Stomach (tissue), 19 donors: ENCODE measurements at regions of chr1 and their contacts with region 1.

Region 1: DNA sequence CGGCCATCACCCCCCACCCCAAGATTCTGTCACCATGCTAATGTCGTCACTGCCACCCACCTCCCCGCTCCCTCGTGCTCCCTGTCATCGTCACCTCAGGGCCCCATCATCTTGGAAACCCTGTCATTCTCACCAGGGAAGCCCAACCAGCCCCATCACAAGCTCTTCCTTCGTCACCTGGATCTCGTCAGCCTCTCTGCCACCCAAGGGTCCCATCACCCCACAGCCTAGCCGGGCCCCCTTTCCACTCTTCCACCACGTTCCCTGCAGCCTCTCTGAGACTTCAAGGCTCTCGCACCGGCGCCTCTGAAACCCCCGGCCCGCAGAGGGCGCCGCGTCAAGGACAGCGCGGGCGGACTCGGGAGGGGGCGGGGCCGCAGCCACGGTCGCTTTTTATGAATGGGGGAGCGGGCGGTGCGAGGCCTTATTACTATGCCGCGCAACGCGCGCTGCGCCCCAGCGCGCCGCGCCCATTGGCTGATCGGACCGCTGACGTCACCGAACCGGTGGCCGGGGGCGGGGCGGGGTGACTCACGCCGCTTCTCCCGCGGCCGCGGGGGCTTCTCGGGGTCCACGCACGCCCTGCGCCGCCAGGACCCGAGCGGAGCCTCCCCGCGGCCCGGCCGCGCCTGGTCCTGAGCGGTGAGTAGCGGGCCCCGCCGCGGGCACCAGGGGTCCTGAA is at the start of gene GPR3:
- DNase-seq: peak; percentile 92 to 96
- H3K4me3 ChIP-seq: peak within 1 kb of the TSS; percentile 44 to 58 (median 50)
- H3K27ac ChIP-seq: peak within 1 kb of the TSS; percentile 28 to 83 (median 67)
- H3K4me1 ChIP-seq: peaks cover 22 to 39% (median 25%) of the 10 kb centered on the region in 4 donors
- H3K27me3 ChIP-seq: peaks cover 0 to 6% (median 0%) of the 10 kb centered on the region in 3 donors
- CTCF ChIP-seq: peak in 5 of 7 experiments; percentile 13 to 53 (median 33)
- EP300 ChIP-seq: no peak
- POLR2A ChIP-seq: no peak
- total RNA-seq, gene GPR3: 0.18 to 0.43 TPM in 2 of 5 donors, not detected in the others

Region 2: GRCh38 chr1:27300341-27301051 is 91.7 kb before region 1 on chr1:
- intact Hi-C with region 1: loop called (anchors 5 kb)
- DNase-seq: peak; percentile 85 to 97
- H3K4me3 ChIP-seq: no peak overlapping the region
- H3K27ac ChIP-seq: peak overlapping the region; percentile 37 to 90 (median 88)
- H3K4me1 ChIP-seq: peaks cover 15 to 51% (median 31%) of the 10 kb centered on the region in 4 donors
- H3K27me3 ChIP-seq: no peaks in the 10 kb centered on the region
- CTCF ChIP-seq: peak in 6 of 7 experiments; percentile 88 to 100 (median 99)
- EP300 ChIP-seq: no peak
- POLR2A ChIP-seq: no peak

Region 3: GRCh38 chr1:27357281-27358037 is 34.8 kb before region 1 on chr1:
- intact Hi-C with region 1: loop called (anchors 5 kb)
- DNase-seq: peak; percentile 87 to 92
- H3K4me3 ChIP-seq: peak overlapping the region; percentile 29 to 47 (median 34)
- H3K27ac ChIP-seq: peak overlapping the region; percentile 45 to 82 (median 69)
- H3K4me1 ChIP-seq: peaks cover 16 to 39% (median 29%) of the 10 kb centered on the region in 4 donors
- H3K27me3 ChIP-seq: no peaks in the 10 kb centered on the region
- CTCF ChIP-seq: peak in 6 of 7 experiments; percentile 46 to 100 (median 94)
- EP300 ChIP-seq: no peak
- POLR2A ChIP-seq: no peak

Region 4: DNA sequence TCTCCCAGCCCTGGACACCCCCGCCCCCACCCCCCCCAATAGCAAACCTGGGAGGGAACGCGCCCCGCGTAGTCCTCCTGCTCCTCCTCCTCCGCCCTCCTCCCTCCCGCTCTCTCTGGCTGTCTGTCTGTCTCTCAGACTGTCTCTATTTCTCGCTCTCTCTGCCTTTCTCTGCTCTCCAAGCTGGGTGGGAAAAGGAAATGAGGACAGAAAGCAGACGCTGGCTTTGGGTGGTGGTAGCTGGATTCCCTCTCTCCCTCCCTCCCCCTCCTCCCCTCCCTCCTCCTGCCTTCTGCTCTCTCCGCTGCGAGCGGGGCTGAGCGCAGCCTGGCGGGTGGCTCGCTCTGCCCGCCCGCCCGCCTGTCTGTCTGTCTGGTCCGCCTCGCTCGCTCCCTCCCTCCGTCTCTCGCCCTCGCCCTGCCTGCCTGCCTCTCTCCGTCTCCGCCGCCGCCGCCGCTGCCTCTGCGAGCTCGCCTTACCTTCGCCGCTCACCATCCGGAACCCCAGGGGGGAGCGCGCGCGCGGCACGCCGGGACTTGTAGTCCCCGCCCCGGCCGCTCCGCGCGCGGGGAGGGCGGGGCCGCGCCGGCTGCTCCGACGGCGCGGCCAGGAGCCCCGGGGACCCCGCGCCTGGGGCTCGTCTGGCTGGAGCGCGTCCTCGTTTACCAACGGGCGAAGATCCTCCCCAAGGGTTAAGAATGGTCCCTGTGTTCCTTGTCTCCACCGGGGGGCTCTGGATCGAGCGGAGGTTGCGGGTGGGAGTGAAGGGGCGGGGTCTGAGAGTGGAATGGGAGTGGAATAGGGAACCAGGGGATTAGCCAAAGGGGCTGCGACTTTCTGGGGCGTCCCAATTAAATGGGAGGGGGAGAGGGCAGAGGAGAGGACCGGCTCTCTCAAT is 211.7 kb after region 1 on chr1 and contains the start of gene AHDC1:
- intact Hi-C with region 1: loop called (anchors 5 kb)
- DNase-seq: peak; percentile 95 to 97
- H3K4me3 ChIP-seq: peak within 1 kb of the TSS; percentile 79 to 98 (median 90)
- H3K27ac ChIP-seq: peak within 1 kb of the TSS; percentile 89 to 99 (median 96)
- H3K4me1 ChIP-seq: peaks cover 36 to 66% (median 62%) of the 10 kb centered on the region in 4 donors
- H3K27me3 ChIP-seq: no peaks in the 10 kb centered on the region
- CTCF ChIP-seq: peak in 2 of 7 experiments; percentile 16 to 18
- EP300 ChIP-seq: no peak
- POLR2A ChIP-seq: peak in 2 of 4 donors; percentile 33 to 71
- total RNA-seq, gene AHDC1: 10.8 to 95.0 (median 35.1) TPM

Region 5: DNA sequence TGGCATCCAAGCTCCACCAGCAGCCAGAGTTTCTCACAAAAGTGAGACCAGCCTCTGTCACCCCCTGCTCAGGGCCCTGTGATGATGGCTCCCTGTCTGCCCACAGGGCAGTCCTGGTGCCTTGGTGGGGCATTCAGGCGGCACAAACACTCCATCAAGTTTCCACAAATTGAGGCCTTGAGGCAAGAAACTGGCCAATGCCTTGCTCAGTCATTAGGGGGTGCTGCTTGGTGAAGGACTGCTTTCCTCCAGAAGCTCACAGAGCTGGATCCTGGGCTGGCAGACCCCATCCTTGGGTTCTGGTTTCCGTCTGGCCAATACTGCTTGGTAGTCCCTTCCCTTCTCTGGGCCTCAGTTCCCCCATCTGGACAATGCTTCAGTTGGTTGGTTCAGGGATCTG is 224.2 kb after region 1 on chr1:
- intact Hi-C with region 1: no loop called
- DNase-seq: peak in 1 of 2 donors; percentile 16
- H3K4me3 ChIP-seq: no peak overlapping the region
- H3K27ac ChIP-seq: no peak overlapping the region
- H3K4me1 ChIP-seq: peaks cover 0 to 32% (median 5%) of the 10 kb centered on the region in 4 donors
- H3K27me3 ChIP-seq: no peaks in the 10 kb centered on the region
- CTCF ChIP-seq: no peak
- EP300 ChIP-seq: no peak
- POLR2A ChIP-seq: no peak